Activated CD4-positive, alpha-beta T cell treated with anti-CD3 and anti-CD28 coated beads for 36 hours (primary cell): ENCODE measurements at regions of chr20 and their contacts with region 1.

Region 1: DNA sequence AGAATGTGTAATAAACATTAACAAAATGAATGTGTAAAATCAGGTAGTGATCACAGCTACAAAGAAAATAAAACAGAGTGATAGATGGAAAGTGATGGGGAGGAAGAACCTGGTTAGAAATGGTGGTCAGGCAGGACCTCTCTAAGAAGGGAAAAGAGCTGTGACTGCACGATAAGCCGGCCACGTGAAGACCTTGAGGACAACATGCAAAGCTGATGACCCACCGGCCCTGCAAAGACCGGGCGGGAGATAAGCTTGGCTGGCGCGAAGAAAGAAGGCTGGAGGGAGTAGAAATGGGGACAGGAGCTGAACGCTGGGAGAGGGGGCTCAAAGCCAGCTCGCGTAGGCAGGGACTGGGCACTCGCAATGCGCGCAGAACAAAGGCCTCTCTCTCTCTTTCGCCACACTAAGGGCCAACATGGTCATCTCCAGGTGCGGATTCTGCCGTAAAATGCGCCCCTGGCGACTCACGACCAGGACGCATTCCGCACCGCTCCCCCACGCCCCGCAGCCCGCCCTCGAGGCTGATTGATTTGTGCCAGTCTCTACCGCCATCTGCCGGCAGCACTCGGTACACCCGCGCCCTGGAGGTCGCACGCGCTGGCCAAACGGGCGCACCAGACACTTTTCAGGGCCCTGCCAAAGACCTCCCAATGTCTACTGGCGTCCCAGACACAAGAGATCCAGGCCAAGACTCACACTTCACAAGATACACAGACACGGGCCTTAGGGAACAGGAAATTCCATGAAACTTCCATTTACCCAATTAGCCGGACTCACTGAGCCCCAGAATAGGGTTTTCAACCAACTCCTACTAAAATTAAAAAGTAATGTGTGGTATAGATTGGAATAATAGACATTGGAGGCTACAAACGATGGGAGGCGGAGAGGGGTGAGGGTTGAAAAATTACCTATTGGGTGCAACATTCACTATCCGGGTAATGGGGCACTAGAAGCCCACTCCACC is 9.4 kb downstream of the DEFB132 start:
- DNase-seq: peak; percentile 96
- ATAC-seq: peak; percentile 96
- H3K4me3 Mint-ChIP-seq: peak overlapping the region; percentile 70
- H3K27ac Mint-ChIP-seq: peak overlapping the region; percentile 71
- H3K4me1 Mint-ChIP-seq: peaks cover 7% of the 10 kb centered on the region
- H3K27me3 Mint-ChIP-seq: peaks cover 4% of the 10 kb centered on the region

Region 2: GRCh38 chr20:208942-209566 is 57.8 kb before region 1 on chr20:
- CTCF ChIA-PET with region 1: interaction called, 29 read pairs
- POLR2A ChIA-PET with region 1: no interaction called
- intact Hi-C with region 1: loop called (anchors 1 kb)
- DNase-seq: peak; percentile 26
- ATAC-seq: peak; percentile 99
- H3K4me3 Mint-ChIP-seq: no peak overlapping the region
- H3K27ac Mint-ChIP-seq: no peak overlapping the region
- H3K4me1 Mint-ChIP-seq: no peaks in the 10 kb centered on the region
- H3K27me3 Mint-ChIP-seq: peaks cover 6% of the 10 kb centered on the region

Region 3: DNA sequence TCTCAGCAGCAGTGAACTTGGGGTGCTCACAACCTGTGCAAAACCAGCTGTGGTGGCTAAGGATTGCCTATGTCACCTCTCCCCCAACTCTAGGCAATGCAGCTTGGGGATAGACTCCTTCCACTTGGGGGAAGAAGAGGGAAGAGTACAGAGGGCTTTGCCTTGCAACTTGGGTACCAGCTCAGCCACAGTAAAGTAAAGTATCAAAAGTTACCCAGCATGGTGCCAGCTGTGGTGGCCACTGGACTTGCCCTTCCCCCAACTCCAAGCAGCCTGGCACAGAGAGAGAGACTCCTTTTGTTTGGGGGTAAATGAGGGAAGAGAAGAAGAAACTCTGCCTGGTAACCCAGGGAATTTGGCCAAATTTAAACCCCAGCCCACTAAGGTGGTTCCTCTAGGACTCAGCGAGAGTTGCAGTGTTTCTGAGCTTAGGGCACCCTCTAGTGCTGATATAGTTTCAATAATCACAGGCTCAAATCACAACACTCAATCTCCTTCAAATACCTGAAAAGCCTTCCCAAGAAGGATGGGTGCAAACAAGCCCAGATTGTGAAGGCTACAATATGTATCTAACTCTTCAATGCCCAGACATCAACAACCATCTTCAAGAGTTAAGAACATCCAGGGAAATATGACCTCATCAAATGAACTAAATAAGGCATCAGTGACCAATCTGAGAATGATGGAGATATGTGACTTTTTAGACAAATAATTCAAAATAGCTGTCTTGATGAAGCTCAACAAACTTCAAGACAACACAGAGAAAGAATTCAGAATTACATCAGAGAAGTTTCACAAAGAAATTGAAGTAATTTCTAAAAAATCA is 47.4 kb before region 1 on chr20:
- CTCF ChIA-PET with region 1: interaction called, 19 read pairs
- POLR2A ChIA-PET with region 1: no interaction called
- intact Hi-C with region 1: no loop called
- DNase-seq: no peak
- ATAC-seq: peak; percentile 44
- H3K4me3 Mint-ChIP-seq: no peak overlapping the region
- H3K27ac Mint-ChIP-seq: no peak overlapping the region
- H3K4me1 Mint-ChIP-seq: no peaks in the 10 kb centered on the region
- H3K27me3 Mint-ChIP-seq: peaks cover 10% of the 10 kb centered on the region

Region 4: DNA sequence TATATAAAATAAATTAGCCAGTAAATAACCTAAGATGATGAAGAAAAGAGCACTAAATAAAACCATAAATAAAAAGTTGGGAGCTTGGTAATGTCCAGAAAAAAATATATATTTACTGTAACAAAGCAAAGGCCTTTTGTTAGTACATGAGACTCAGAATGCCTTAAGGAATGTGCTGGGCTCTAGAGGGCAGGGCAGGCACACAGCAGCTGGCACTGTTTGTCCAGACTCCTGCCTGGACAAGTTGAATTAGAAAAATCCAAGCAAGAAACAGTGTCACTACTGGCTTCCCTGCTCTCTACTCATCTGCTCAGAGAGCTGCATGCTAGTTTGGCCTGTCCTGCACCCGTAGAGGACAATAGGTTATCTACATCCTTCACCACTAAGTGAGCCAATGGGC is 31.0 kb before region 1 on chr20:
- CTCF ChIA-PET with region 1: interaction called, 17 read pairs
- POLR2A ChIA-PET with region 1: interaction called, 4 read pairs
- intact Hi-C with region 1: loop called in 1 of 2 experiments (anchors 1 kb)
- DNase-seq: no peak
- ATAC-seq: no peak
- H3K4me3 Mint-ChIP-seq: no peak overlapping the region
- H3K27ac Mint-ChIP-seq: no peak overlapping the region
- H3K4me1 Mint-ChIP-seq: peaks cover 28% of the 10 kb centered on the region
- H3K27me3 Mint-ChIP-seq: no peaks in the 10 kb centered on the region

Region 5: DNA sequence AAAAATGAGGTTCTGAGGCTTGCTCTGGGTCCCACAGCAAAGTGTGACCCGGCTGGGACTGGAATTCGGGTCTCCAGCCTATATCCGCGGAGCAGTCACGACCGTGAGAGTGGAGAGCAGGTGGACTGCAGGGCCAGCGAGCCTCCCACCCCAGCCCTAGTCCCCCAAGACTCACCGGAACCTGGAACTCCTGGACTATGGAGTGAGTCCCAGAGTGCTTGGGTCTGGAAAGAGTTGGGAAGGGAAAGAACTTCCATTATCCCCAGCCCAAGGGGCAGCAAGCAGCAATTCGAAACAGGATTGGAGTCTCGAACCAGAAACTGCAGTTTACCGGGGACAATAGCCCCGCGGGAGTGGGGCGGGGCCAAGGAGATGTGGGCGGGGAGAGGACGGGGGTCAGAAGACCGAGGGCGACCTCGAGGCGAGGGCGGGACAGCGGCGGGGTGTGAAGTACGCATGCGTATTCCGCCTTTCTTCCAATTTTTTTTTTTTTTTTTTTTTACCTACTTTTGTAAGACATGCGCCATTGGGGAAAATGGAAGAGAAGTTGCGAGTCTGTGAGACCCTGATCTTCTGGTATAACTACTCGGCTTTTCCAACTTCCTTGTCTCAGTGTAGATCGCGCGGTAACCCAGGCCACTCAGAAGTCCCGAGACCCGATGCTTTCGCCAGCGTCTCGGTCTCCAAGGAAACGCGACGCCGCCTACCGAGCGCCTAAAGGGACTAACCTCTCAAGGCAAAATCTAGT is 23.4 kb after region 1 on chr20 and contains the start of gene C20orf96:
- CTCF ChIA-PET with region 1: interaction called, 5 read pairs
- POLR2A ChIA-PET with region 1: no interaction called
- intact Hi-C with region 1: loop called in 1 of 2 experiments (anchors 1 kb)
- DNase-seq: peak; percentile 94
- ATAC-seq: peak; percentile 94
- H3K4me3 Mint-ChIP-seq: no peak within 1 kb of the TSS
- H3K27ac Mint-ChIP-seq: peak within 1 kb of the TSS; percentile 85
- H3K4me1 Mint-ChIP-seq: peaks cover 15% of the 10 kb centered on the region
- H3K27me3 Mint-ChIP-seq: no peaks in the 10 kb centered on the region
- total RNA-seq, gene C20orf96: 7.0 to 8.1 TPM

Region 6: DNA sequence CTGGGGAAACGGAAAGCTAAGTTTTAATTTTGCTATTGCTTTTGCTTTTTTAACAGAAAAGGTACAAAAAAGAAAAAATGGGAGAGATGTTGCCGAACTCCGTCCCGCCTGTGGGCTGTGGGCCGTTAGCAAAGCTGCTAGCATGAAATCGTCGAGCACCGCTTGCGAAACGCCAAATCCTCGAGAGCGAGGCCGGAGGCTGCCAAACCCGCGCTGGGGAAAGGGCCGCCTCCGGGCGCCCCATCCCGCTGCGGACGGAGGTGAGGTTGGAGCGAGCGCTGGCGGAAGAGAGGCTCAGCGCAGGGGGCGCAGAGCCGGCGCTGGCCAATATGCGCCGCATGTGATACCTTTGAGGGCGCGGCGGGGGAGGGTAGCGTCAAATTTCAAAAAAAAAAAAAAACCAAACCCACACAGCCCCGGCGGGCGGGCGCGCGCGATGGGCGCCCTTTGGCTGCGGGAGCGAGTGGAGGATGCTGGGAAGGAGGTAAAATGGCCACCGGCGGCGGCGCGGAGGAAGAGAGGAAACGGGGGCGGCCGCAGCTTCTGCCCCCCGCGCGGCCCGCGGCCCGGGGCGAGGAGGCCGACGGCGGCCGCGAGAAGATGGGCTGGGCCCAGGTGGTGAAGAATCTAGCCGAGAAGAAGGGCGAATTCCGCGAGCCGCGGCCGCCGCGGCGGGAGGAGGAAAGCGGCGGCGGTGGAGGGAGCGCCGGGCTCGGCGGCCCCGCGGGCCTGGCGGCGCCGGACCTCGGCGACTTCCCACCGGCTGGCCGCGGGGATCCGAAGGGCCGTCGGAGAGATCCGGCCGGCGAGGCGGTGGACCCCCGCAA is 30.4 kb after region 1 on chr20 and contains the start of gene ZCCHC3:
- CTCF ChIA-PET with region 1: interaction called, 13 read pairs
- POLR2A ChIA-PET with region 1: no interaction called
- intact Hi-C with region 1: no loop called
- DNase-seq: peak; percentile 92
- ATAC-seq: peak; percentile 81
- H3K4me3 Mint-ChIP-seq: peak within 1 kb of the TSS; percentile 100
- H3K27ac Mint-ChIP-seq: peak within 1 kb of the TSS; percentile 99
- H3K4me1 Mint-ChIP-seq: peaks cover 44% of the 10 kb centered on the region
- H3K27me3 Mint-ChIP-seq: no peaks in the 10 kb centered on the region
- total RNA-seq, gene ZCCHC3: 15.6 to 16.4 TPM

Region 7: GRCh38 chr20:330233-331149 is 63.6 kb after region 1 on chr20:
- CTCF ChIA-PET with region 1: interaction called, 24 read pairs
- POLR2A ChIA-PET with region 1: no interaction called
- intact Hi-C with region 1: loop called (anchors 1 to 2 kb)
- DNase-seq: peak; percentile 78
- ATAC-seq: peak; percentile 66
- H3K4me3 Mint-ChIP-seq: no peak overlapping the region
- H3K27ac Mint-ChIP-seq: no peak overlapping the region
- H3K4me1 Mint-ChIP-seq: peaks cover 17% of the 10 kb centered on the region
- H3K27me3 Mint-ChIP-seq: no peaks in the 10 kb centered on the region

Region 8: GRCh38 chr20:1491281-1491840 is 1224.5 kb after region 1 on chr20 and contains the start of gene SIRPB2:
- CTCF ChIA-PET with region 1: no interaction called
- POLR2A ChIA-PET with region 1: no interaction called
- intact Hi-C with region 1: no loop called
- DNase-seq: no peak
- ATAC-seq: no peak
- H3K4me3 Mint-ChIP-seq: no peak within 1 kb of the TSS
- H3K27ac Mint-ChIP-seq: no peak within 1 kb of the TSS
- H3K4me1 Mint-ChIP-seq: peaks cover 15% of the 10 kb centered on the region
- H3K27me3 Mint-ChIP-seq: peaks cover 11% of the 10 kb centered on the region
- total RNA-seq, gene SIRPB2: not detected